Right ventricle myocardium inferior (tissue), 1 donor: ENCODE measurements at regions of chr10 and their contacts with region 1.

Region 1: GRCh38 chr10:73017955-73018480 is 63.4 kb upstream of the PLA2G12B start:
- DNase-seq: peak; percentile 25
- ATAC-seq: peak; percentile 82

Region 2: GRCh38 chr10:73131301-73131700 is 113.3 kb after region 1 on chr10:
- intact Hi-C with region 1: loop called (anchors 10 kb)
- DNase-seq: no peak
- ATAC-seq: no peak